ENCODE measurements at regions of chr5 and their contacts with region 1.

Region 1: GRCh38 chr5:96256778-96257470 is 176.1 kb downstream of the PCSK1 start:
- DNase-seq: no peak
- H3K4me3 ChIP-seq: no peak overlapping the region
- H3K27ac ChIP-seq: no peak overlapping the region
- H3K4me1 ChIP-seq: peaks cover 56% of the 10 kb centered on the region
- H3K27me3 ChIP-seq: no peaks in the 10 kb centered on the region
- CTCF ChIP-seq: no peak

Region 2: GRCh38 chr5:95718203-95718602 is 538.7 kb before region 1 on chr5:
- CTCF ChIA-PET with region 1: no interaction called
- POLR2A ChIA-PET with region 1: no interaction called
- intact Hi-C with region 1: loop called (anchors 10 kb)
- DNase-seq: no peak
- H3K4me3 ChIP-seq: no peak overlapping the region
- H3K27ac ChIP-seq: no peak overlapping the region
- H3K4me1 ChIP-seq: peaks cover 19% of the 10 kb centered on the region
- H3K27me3 ChIP-seq: no peaks in the 10 kb centered on the region
- CTCF ChIP-seq: no peak

Region 3: DNA sequence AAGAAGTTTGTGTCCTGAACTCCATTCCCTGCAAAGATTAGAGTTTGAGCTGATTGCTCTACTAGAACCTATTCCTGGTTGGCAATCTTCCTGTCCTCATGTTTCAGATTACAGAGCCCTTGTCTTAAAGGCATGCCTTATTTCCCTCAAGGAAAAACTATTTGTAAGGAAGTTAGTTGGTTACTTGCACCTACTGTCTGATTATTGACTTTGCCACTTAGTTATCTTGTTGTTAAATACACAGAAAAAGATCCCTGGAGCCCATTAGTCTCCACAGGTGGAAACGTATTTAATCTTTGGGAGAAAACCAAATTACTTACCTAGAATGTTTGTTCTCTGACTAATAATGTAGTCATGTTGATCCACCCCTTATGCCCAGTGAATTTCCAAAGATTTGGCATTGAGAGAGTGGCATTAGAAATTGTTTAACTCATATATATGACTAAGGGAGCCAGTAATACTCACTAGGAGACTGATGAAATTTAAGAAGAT is 163.0 kb before region 1 on chr5:
- CTCF ChIA-PET with region 1: no interaction called
- POLR2A ChIA-PET with region 1: no interaction called
- intact Hi-C with region 1: loop called (anchors 1 kb)
- DNase-seq: peak; percentile 21 to 97
- H3K4me3 ChIP-seq: no peak overlapping the region
- H3K27ac ChIP-seq: peak overlapping the region; percentile 88
- H3K4me1 ChIP-seq: peaks cover 36% of the 10 kb centered on the region
- H3K27me3 ChIP-seq: no peaks in the 10 kb centered on the region
- CTCF ChIP-seq: no peak

Region 4: DNA sequence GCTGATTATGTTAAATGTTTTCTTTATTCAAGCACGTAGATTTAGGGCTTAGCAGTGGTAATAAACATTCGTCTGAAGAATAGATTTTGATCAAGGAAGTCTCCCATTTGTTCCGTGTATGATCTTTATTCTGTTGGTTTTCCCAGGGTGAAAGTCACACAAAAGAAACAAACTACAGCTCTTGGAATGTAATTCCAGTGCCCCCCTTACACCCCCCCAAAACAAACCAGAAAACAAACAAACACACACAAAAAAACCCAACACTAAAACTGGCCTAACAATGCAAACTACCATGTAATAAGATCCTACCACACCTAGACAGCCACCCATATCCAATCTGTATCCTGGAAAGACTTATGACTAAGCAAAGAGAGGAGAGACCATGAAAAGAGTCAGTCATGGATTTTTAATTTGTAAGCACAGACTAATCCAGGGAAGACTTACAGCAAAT is 99.1 kb before region 1 on chr5:
- CTCF ChIA-PET with region 1: interaction called, 3 read pairs
- POLR2A ChIA-PET with region 1: no interaction called
- intact Hi-C with region 1: loop called (anchors 5 kb)
- DNase-seq: peak in 1 of 2 experiments; percentile 63
- H3K4me3 ChIP-seq: no peak overlapping the region
- H3K27ac ChIP-seq: no peak overlapping the region
- H3K4me1 ChIP-seq: peaks cover 13% of the 10 kb centered on the region; the same call in 1 of the 2 replicates
- H3K27me3 ChIP-seq: no peaks in the 10 kb centered on the region
- CTCF ChIP-seq: no peak

Region 5: GRCh38 chr5:96324708-96325107 is 67.8 kb after region 1 on chr5:
- CTCF ChIA-PET with region 1: interaction called, 15 read pairs
- POLR2A ChIA-PET with region 1: no interaction called
- intact Hi-C with region 1: no loop called
- DNase-seq: peak; percentile 36 to 87
- H3K4me3 ChIP-seq: no peak overlapping the region
- H3K27ac ChIP-seq: peak overlapping the region; percentile 57; the same call in 1 of the 2 replicates
- H3K4me1 ChIP-seq: peaks cover 28% of the 10 kb centered on the region
- H3K27me3 ChIP-seq: no peaks in the 10 kb centered on the region
- CTCF ChIP-seq: no peak

Measured in PC-9 (cell line).